ENCODE measurements at regions of chr3 and their contacts with region 1.

Region 1: DNA sequence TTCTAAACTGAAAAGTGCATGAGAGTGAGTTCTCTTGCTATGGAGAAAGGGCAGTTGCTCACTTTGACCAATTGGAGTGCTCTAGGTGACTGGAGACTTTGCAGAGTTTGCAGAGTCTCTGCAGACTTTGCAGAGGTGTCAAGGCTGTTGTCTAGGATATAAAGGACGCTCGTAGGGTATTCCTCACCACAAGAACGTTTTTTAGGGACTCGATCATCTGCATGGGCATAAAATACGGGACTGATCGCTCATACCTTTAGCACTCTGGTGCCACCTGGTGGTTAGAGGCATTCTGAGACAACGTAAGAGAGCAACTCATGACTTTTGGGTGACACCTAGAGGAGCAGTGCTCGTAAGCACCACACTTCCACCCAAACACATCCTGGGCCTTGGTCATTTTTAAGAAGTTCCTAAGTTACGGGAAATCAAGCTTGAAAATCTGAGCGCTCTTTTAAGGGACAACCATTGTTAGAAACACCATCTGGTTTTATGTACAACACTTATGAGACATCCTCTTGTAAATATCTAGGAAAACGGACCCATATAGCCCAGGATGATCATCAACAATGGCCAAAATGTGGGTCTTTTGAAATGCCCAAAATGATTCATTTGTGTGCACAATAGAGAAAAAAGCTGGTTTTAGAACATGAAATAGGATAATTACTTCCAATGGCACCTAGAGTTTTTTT is 51.6 kb upstream of the XCR1 start:
- DNase-seq: peak; percentile 94
- ATAC-seq: peak; percentile 98
- H3K4me3 Mint-ChIP-seq: no peak overlapping the region
- H3K27ac Mint-ChIP-seq: peak overlapping the region; percentile 67
- H3K4me1 Mint-ChIP-seq: peaks cover 58% of the 10 kb centered on the region
- H3K27me3 Mint-ChIP-seq: peaks cover 10% of the 10 kb centered on the region

Region 2: GRCh38 chr3:45443459-45443858 is 635.4 kb before region 1 on chr3:
- CTCF ChIA-PET with region 1: no interaction called
- DNase-seq: no peak
- ATAC-seq: no peak
- H3K4me3 Mint-ChIP-seq: no peak overlapping the region
- H3K27ac Mint-ChIP-seq: no peak overlapping the region
- H3K4me1 Mint-ChIP-seq: no peaks in the 10 kb centered on the region
- H3K27me3 Mint-ChIP-seq: no peaks in the 10 kb centered on the region

Region 3: DNA sequence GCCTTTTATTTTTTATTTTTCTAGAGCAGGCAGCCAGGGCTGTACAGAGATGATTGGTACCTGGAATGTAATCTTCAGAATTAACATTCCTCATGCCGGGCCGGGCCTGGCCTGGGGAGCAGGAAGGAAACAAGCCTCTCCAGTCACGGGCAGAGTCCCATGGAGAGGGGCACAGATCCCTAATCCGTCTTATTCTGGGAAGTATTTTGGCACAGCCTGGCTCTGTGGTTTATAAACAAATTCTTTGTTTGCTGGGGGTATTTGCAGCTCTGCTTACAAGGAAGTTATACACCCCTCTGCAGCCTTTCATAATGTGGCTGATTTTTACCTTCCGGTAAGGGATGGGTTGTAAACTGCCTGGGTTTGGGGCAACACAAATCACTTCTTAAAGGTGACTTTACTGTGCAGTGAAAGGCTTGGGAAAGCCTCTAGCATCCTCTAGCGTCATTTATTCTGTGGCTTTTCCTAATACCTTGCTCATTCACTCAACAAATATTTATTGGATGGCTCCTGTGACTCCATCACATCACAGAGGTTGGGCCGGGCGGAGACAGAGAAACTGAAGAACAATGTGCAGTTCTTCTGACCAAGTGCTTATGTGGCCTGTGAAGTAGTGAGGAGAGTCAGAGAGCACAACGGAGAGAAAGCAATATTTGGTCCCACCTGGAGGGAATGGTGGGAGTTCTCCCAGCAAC is 285.2 kb before region 1 on chr3:
- CTCF ChIA-PET with region 1: no interaction called
- DNase-seq: peak; percentile 36
- ATAC-seq: no peak
- H3K4me3 Mint-ChIP-seq: no peak overlapping the region
- H3K27ac Mint-ChIP-seq: no peak overlapping the region
- H3K4me1 Mint-ChIP-seq: peaks cover 7% of the 10 kb centered on the region
- H3K27me3 Mint-ChIP-seq: peaks cover 76% of the 10 kb centered on the region

Region 4: GRCh38 chr3:45958321-45958791 is 120.5 kb before region 1 on chr3:
- CTCF ChIA-PET with region 1: interaction called, 708 read pairs
- DNase-seq: no peak
- ATAC-seq: no peak
- H3K4me3 Mint-ChIP-seq: no peak overlapping the region
- H3K27ac Mint-ChIP-seq: peak overlapping the region; percentile 35
- H3K4me1 Mint-ChIP-seq: peaks cover 59% of the 10 kb centered on the region
- H3K27me3 Mint-ChIP-seq: no peaks in the 10 kb centered on the region

Region 5: GRCh38 chr3:45987368-45988291 is 91.2 kb before region 1 on chr3:
- CTCF ChIA-PET with region 1: interaction called, 38 read pairs
- DNase-seq: no peak
- ATAC-seq: no peak
- H3K4me3 Mint-ChIP-seq: no peak overlapping the region
- H3K27ac Mint-ChIP-seq: no peak overlapping the region
- H3K4me1 Mint-ChIP-seq: peaks cover 89% of the 10 kb centered on the region
- H3K27me3 Mint-ChIP-seq: no peaks in the 10 kb centered on the region

Region 6: GRCh38 chr3:46065294-46065721 is 13.5 kb before region 1 on chr3:
- CTCF ChIA-PET with region 1: interaction called, 67 read pairs
- DNase-seq: peak; percentile 71
- ATAC-seq: peak; percentile 70
- H3K4me3 Mint-ChIP-seq: no peak overlapping the region
- H3K27ac Mint-ChIP-seq: peak overlapping the region; percentile 16
- H3K4me1 Mint-ChIP-seq: peaks cover 47% of the 10 kb centered on the region
- H3K27me3 Mint-ChIP-seq: peaks cover 9% of the 10 kb centered on the region

Region 7: GRCh38 chr3:46208167-46208704 is 129.4 kb after region 1 on chr3 and contains the start of gene CCR1:
- CTCF ChIA-PET with region 1: interaction called, 98 read pairs
- DNase-seq: peak; percentile 89
- ATAC-seq: peak; percentile 67
- H3K4me3 Mint-ChIP-seq: peak within 1 kb of the TSS; percentile 79
- H3K27ac Mint-ChIP-seq: peak within 1 kb of the TSS; percentile 90
- H3K4me1 Mint-ChIP-seq: peaks cover 68% of the 10 kb centered on the region
- H3K27me3 Mint-ChIP-seq: no peaks in the 10 kb centered on the region
- total RNA-seq, gene CCR1: 35.3 to 55.6 TPM

Measured in activated CD8-positive, alpha-beta memory T cell treated with anti-CD3 and anti-CD28 coated beads, Interleukin-2, amount 10 ng/mL, durations not matched to agents 7 days and 5 days (primary cell).